HEK293 (cell line): ENCODE measurements at regions of chr2 and their contacts with region 1.

Region 1: DNA sequence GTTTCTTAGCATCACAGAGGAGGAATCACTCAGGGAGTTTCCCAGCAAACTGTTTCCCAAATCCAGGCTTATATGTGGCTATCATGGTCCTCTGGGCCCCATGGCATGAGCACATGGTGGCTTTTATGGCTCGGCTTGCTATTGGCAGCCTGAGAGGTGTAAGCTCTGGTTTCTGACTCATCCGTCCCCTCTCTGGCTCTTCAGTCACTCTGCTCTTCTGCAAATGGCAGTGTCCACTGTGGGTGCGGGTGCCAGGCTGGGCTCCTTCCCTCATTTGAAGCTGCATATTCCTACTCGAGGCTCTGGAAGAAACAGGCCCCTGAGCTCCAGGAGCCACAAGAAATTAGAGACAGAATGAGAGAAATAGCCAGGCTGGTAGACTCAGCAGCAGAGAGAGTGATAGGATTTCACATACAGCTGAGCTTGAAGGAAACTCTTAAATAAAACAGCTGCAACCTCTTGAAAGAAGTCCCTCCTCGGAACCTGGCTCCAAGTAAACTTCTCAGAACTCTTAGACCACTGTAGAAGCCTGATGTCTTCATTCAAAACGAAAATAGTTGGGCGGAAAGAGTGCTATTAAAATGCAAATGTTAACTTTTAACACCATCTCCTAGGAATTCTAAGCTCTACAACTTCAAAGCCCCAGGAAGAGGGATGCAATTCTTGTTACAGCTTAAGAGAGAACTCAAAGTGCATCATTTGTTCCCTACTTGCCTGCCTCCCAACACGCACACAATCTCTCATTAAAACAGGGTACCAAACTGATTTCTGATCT is 212.6 kb upstream of the SP5 start:
- H3K4me3 ChIP-seq: no peak overlapping the region
- H3K27ac ChIP-seq: no peak overlapping the region
- H3K4me1 ChIP-seq: no peaks in the 10 kb centered on the region
- CTCF ChIP-seq: no peak

Region 2: GRCh38 chr2:170523506-170523905 is 21.0 kb after region 1 on chr2:
- CTCF ChIA-PET with region 1: no interaction called
- POLR2A ChIA-PET with region 1: interaction called, 13 read pairs
- H3K4me3 ChIP-seq: no peak overlapping the region
- H3K27ac ChIP-seq: no peak overlapping the region
- H3K4me1 ChIP-seq: no peaks in the 10 kb centered on the region
- CTCF ChIP-seq: no peak

Region 3: DNA sequence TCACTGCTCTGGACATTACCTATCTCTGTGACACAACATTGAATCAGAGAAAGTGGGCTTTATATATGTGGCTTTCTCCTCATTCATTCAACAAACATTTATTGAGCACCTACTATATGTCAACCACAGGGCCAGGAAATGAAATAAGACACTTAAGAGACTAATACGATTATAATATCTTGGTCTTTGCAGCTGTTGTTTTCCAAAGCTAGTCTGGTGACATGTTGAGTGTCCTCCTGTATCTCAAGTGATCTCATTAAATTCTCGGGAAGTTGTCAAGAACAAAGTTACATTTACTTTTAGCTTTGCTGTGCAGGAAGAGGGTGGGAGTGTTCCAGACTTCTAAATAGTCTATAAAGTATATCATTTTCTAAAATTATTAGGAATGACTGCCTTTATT is 48.0 kb after region 1 on chr2:
- CTCF ChIA-PET with region 1: no interaction called
- POLR2A ChIA-PET with region 1: no interaction called
- H3K4me3 ChIP-seq: no peak overlapping the region
- H3K27ac ChIP-seq: no peak overlapping the region
- H3K4me1 ChIP-seq: no peaks in the 10 kb centered on the region
- CTCF ChIP-seq: no peak

Region 4: GRCh38 chr2:170665743-170666142 is 163.2 kb after region 1 on chr2:
- CTCF ChIA-PET with region 1: no interaction called
- POLR2A ChIA-PET with region 1: no interaction called
- H3K4me3 ChIP-seq: no peak overlapping the region
- H3K27ac ChIP-seq: no peak overlapping the region
- H3K4me1 ChIP-seq: no peaks in the 10 kb centered on the region
- CTCF ChIP-seq: no peak